Dendritic cell treated with granulocyte-macrophage colony-stimulating factor and Interleukin-4, amounts not matched to agents 40 ng/mL and 50 ng/mL, for 4 days (primary cell): ENCODE measurements at regions of chr9 and their contacts with region 1.

Region 1: DNA sequence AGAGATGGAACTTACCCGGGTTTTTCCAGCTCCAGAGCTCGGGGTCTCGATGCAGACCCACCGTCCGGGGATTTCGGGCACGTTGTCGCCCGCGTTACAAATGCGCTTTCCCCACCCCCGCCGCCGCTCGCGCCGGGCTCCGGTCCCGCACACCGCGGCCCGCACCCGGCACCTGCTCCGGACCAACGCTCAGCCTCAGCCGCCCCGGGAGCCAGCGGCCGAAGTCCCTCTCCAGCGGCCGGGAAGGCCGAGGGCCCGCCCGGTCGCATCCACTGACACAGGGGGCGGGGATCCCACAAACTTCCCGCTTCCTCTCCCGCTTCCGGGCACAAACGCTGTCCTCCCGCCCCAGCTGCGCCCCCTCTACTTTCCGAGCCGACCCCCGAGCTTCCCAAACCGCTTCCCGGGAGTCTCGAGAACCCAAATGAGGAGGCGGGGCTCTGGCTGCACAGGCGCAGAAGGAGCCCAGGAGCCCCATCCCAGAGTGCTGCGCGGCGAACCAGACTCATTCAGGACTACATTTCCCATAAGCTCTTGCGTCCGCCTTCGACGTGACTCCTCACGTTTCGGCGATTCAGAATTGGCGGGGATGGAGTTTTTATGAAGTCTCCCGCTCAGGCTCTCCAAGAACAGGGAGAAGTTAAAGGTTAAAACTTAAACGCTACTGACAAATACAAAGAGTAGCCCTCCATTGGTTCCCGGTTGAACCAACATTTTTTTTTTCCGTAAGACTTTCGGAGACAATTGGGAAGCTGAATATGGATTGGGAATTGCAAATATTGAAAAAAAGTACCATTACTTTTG is at the start of gene ZNF782:
- H3K4me3 Mint-ChIP-seq: peak within 1 kb of the TSS; percentile 99
- H3K27ac Mint-ChIP-seq: peak within 1 kb of the TSS; percentile 90
- H3K4me1 Mint-ChIP-seq: peaks cover 22% of the 10 kb centered on the region
- H3K27me3 Mint-ChIP-seq: peaks cover 9% of the 10 kb centered on the region

Region 2: DNA sequence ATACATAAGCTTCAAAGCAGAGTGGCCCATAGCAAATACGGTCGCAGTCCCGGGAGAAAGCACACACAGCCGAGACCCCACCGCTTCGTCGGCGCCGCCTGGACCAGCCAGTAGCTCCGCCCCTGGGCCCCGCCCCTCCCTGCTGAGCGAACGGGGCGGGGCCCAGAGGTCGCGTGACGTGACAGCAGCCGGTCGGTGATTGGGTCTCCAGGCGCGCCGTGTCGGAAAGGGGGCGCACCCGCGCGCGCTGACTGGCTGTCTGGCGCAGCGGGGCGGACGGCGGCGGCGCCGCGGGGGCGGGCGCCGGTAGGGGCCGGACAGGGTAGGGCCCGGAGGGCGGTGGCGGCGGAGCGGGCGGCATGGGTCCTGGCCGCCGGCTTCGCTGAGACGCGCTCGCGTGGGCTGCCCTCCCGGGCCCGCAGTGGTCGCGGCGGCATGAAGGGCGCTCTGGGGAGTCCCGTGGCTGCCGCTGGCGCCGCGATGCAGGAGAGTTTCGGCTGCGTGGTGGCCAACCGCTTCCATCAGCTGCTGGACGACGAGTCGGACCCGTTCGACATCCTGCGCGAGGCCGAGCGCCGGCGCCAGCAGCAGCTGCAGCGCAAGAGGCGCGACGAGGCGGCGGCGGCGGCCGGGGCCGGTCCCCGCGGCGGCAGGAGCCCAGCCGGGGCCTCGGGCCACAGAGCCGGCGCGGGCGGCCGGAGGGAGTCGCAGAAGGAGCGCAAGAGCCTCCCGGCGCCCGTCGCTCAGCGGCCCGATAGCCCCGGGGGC is 404.2 kb before region 1 on chr9 and contains the start of gene HABP4:
- intact Hi-C with region 1: loop called (anchors 10 kb)
- H3K4me3 Mint-ChIP-seq: peak within 1 kb of the TSS; percentile 74
- H3K27ac Mint-ChIP-seq: peak within 1 kb of the TSS; percentile 62
- H3K4me1 Mint-ChIP-seq: peaks cover 19% of the 10 kb centered on the region
- H3K27me3 Mint-ChIP-seq: peaks cover 60% of the 10 kb centered on the region

Region 3: GRCh38 chr9:97038909-97039781 is 184.9 kb after region 1 on chr9 and contains the start of gene CTSV:
- intact Hi-C with region 1: loop called (anchors 10 kb)
- H3K4me3 Mint-ChIP-seq: peak within 1 kb of the TSS; percentile 85
- H3K27ac Mint-ChIP-seq: peak within 1 kb of the TSS; percentile 62
- H3K4me1 Mint-ChIP-seq: peaks cover 33% of the 10 kb centered on the region
- H3K27me3 Mint-ChIP-seq: peaks cover 43% of the 10 kb centered on the region

Region 4: GRCh38 chr9:97398999-97399758 is 544.9 kb after region 1 on chr9:
- intact Hi-C with region 1: loop called (anchors 1 kb)
- H3K4me3 Mint-ChIP-seq: no peak overlapping the region
- H3K27ac Mint-ChIP-seq: no peak overlapping the region
- H3K4me1 Mint-ChIP-seq: no peaks in the 10 kb centered on the region
- H3K27me3 Mint-ChIP-seq: peaks cover 6% of the 10 kb centered on the region